Stomach (tissue), 19 donors: ENCODE measurements at regions of chr4 and their contacts with region 1.

Region 1: GRCh38 chr4:154622416-154622997 is 10.1 kb upstream of the FGG start:
- DNase-seq: peak in 1 of 2 donors; percentile 78
- H3K4me3 ChIP-seq: no peak overlapping the region
- H3K27ac ChIP-seq: no peak overlapping the region
- H3K4me1 ChIP-seq: peaks cover 7 to 23% (median 13%) of the 10 kb centered on the region in 4 donors
- H3K27me3 ChIP-seq: peaks cover 0 to 16% (median 6%) of the 10 kb centered on the region in 3 donors
- CTCF ChIP-seq: peak in 5 of 7 experiments; percentile 24 to 48 (median 32)
- EP300 ChIP-seq: no peak
- POLR2A ChIP-seq: no peak

Region 2: GRCh38 chr4:154559494-154560418 is 62.8 kb before region 1 on chr4:
- intact Hi-C with region 1: loop called (anchors 5 kb)
- DNase-seq: peak in 1 of 2 donors; percentile 75
- H3K4me3 ChIP-seq: no peak overlapping the region
- H3K27ac ChIP-seq: no peak overlapping the region
- H3K4me1 ChIP-seq: no peaks in the 10 kb centered on the region
- H3K27me3 ChIP-seq: no peaks in the 10 kb centered on the region
- CTCF ChIP-seq: peak in 4 of 7 experiments; percentile 9 to 49 (median 36)
- EP300 ChIP-seq: no peak
- POLR2A ChIP-seq: no peak

Region 3: DNA sequence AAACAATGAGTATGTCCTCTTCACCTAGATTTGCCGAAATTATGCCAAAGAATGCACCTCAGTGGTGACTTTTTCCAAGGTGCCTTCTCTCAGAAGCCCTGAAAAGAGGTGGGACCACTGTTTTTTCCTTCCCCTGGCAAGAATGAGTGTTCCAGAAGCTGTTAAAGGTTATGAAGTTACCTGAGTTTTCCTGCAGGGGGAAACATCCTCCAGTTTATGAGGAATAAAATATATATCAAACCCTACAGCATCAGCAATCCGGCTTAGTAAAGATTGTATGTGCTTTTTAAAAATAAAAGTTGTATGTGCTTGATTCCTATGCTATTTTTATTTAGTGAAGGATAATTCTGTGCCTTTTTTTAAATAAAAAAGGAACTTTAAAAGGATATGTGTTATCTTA is 231.9 kb after region 1 on chr4:
- intact Hi-C with region 1: no loop called
- DNase-seq: peak in 1 of 2 donors; percentile 27
- H3K4me3 ChIP-seq: no peak overlapping the region
- H3K27ac ChIP-seq: no peak overlapping the region
- H3K4me1 ChIP-seq: no peaks in the 10 kb centered on the region
- H3K27me3 ChIP-seq: no peaks in the 10 kb centered on the region
- CTCF ChIP-seq: no peak
- EP300 ChIP-seq: no peak
- POLR2A ChIP-seq: no peak